Heart right ventricle (tissue), 16 donors: ENCODE measurements at regions of chr16 and their contacts with region 1.

Region 1: GRCh38 chr16:52677501-52677900 is 130.6 kb upstream of the TOX3 start:
- DNase-seq: no peak
- ATAC-seq: no peak
- H3K4me3 ChIP-seq: no peak overlapping the region
- H3K27ac ChIP-seq: no peak overlapping the region
- H3K4me1 ChIP-seq: no peaks in the 10 kb centered on the region
- H3K27me3 ChIP-seq: peaks cover 0 to 3% (median 0%) of the 10 kb centered on the region in 7 donors
- CTCF ChIP-seq: no peak

Region 2: DNA sequence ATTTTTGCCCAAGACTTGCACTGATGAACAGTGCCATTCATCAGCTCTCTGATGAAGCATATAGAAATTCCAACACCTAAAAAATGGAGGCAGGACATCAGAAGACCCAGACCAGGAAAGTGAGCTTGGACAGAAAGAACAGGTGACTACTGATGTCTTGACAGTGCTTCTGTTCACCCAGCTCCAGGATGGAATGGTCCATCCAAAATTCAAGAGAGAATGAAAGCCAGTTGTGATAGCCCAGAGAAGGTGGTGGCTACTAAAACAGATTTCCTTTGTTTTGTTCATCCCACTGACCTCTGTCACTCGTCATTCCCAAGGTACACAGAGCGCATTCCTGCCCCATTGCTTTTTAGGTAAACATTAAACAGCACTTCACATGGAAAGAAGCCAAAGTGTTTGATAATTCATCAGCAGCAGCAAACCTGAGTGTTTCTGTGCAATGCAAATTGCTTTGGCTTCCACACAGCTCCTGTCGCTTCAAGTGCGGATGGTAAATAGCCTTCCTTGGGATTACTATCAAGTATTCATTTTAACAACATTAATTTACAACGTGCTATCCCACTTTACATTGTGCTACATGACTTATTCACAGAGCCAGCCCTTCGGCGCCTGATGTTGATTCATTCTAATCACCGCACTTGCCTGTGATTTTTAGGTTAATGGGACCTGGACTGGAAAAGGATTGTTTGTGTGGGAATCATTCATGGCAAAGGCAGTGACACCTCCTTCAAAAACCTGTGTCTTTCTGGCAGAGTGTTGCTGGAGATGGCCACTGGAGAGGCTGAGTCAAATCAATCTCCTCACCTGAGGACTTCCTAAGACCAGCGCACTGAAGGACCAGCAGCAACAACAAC is 65.5 kb before region 1 on chr16:
- intact Hi-C with region 1: loop called in 1 of 10 experiments (anchors 10 kb)
- DNase-seq: no peak
- ATAC-seq: no peak
- H3K4me3 ChIP-seq: no peak overlapping the region
- H3K27ac ChIP-seq: no peak overlapping the region
- H3K4me1 ChIP-seq: no peaks in the 10 kb centered on the region
- H3K27me3 ChIP-seq: peaks cover 0 to 3% (median 0%) of the 10 kb centered on the region in 7 donors
- CTCF ChIP-seq: no peak